Prostate gland (tissue), 2 donors: ENCODE measurements at regions of chr10 and their contacts with region 1.

Region 1: DNA sequence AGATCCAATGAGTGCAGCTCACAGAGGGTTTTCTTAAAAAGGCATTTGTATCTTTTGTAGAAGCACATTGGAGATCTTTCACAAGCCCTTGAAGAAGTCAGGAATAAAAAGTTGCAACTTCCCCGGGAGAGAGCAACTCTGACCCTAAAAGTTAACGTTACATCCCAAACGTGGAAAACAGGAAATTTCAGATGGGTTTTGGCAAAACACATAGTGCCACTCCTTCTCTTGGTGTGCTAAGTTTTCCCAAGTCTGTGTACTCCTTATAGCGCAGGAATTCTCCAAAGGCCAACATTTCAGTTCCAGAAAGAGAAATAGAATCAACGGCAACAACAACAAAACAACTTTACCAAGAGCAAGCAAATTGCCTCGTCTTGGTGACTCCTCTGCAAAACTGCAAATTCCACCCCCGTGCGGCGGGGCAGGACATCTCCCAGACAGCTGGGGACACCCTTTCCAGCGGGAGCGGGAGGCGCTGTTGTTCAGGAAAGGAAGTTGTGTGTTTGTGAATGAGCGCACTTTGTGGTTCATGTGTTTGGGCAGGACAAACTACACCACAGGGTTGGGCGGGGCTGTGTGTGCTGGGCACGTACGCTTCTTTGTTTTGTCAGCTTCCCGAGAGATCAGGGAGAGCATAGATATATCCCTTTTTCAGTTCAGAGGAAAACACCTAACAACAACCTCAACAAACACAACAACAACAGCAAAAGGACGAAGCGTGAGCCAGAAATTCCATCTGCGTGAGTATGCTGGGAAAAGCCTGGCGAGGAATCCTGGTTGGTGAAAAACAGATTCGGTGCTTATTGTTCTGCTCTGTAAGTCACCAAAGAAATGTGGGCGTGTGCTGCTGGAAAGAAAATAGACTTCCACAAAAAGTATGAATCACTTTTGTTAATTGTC is 294.7 kb upstream of the PITRM1 start:
- DNase-seq: peak; percentile 68
- H3K4me3 ChIP-seq: no peak overlapping the region
- H3K27ac ChIP-seq: peak overlapping the region; percentile 75 to 80
- H3K4me1 ChIP-seq: peaks cover 17% of the 10 kb centered on the region
- H3K27me3 ChIP-seq: no peaks in the 10 kb centered on the region
- CTCF ChIP-seq: peak in 2 of 4 experiments; percentile 34 to 55
- POLR2A ChIP-seq: peak; percentile 31

Region 2: GRCh38 chr10:3192856-3193635 is 274.3 kb before region 1 on chr10:
- intact Hi-C with region 1: no loop called
- DNase-seq: peak; percentile 60
- H3K4me3 ChIP-seq: peak overlapping the region in 1 of 2 donors; percentile 25
- H3K27ac ChIP-seq: peak overlapping the region in 1 of 2 donors; percentile 18
- H3K4me1 ChIP-seq: no peaks in the 10 kb centered on the region
- H3K27me3 ChIP-seq: no peaks in the 10 kb centered on the region
- CTCF ChIP-seq: peak; percentile 84 to 90 (median 88)
- POLR2A ChIP-seq: no peak

Region 3: GRCh38 chr10:3401491-3401938 is 65.8 kb before region 1 on chr10:
- intact Hi-C with region 1: no loop called
- DNase-seq: no peak
- H3K4me3 ChIP-seq: no peak overlapping the region
- H3K27ac ChIP-seq: no peak overlapping the region
- H3K4me1 ChIP-seq: no peaks in the 10 kb centered on the region
- H3K27me3 ChIP-seq: no peaks in the 10 kb centered on the region
- CTCF ChIP-seq: no peak
- POLR2A ChIP-seq: no peak

Region 4: DNA sequence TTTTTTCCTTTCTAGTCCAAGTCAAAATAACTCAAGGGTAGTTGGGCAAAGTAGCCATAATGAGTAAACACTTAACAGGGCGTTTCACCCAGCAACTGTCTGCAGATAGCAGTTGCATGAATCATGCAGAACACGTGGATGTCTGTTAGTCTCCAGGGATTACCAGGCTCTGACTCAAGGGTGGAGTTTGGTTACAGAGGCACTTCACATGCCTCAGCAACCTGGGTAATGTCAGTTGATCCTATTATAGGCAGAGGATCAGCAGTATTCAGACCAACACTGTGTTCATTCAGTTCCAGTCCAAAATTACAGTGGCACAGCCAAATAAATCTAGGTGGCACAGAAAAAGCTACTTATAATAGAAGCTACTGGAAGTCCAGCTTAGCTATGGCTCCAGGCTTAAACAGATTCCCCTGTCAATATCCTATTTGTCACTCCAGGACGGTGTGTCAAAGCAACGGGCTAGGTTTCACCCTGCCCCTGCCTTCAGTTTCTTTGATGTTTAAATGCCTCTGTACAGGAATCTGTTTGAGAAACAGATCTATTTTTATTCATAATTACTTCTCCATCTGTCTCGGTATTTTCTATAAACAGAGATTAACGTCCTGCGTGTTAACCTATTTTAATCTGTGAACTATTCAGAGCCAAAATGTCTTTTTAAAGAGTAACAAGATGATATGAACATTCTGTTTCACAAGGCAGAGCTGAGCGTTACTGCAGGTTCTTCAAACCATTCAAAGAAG is 1196.0 kb after region 1 on chr10:
- intact Hi-C with region 1: loop called (anchors 5 kb)
- DNase-seq: peak; percentile 91
- H3K4me3 ChIP-seq: no peak overlapping the region
- H3K27ac ChIP-seq: peak overlapping the region; percentile 60 to 73
- H3K4me1 ChIP-seq: peaks cover 18% of the 10 kb centered on the region
- H3K27me3 ChIP-seq: no peaks in the 10 kb centered on the region
- CTCF ChIP-seq: no peak
- POLR2A ChIP-seq: peak; percentile 26